ENCODE measurements at regions of chr9 and their contacts with region 1.

Region 1: GRCh38 chr9:136944519-136945279 is at the starts of genes C8G and FBXW5:
- DNase-seq: peak; percentile 59 to 96
- H3K4me3 ChIP-seq: peak within 1 kb of the TSS; percentile 88 to 90
- H3K27ac ChIP-seq: peak within 1 kb of the TSS; percentile 52 to 87
- H3K4me1 ChIP-seq: peaks cover 6 to 21% of the 10 kb centered on the region in 2 donors
- H3K27me3 ChIP-seq: no peaks in the 10 kb centered on the region
- CTCF ChIP-seq: peak; percentile 99
- total RNA-seq, gene C8G: 8.6 TPM
- total RNA-seq, gene FBXW5: 421 TPM

Region 2: DNA sequence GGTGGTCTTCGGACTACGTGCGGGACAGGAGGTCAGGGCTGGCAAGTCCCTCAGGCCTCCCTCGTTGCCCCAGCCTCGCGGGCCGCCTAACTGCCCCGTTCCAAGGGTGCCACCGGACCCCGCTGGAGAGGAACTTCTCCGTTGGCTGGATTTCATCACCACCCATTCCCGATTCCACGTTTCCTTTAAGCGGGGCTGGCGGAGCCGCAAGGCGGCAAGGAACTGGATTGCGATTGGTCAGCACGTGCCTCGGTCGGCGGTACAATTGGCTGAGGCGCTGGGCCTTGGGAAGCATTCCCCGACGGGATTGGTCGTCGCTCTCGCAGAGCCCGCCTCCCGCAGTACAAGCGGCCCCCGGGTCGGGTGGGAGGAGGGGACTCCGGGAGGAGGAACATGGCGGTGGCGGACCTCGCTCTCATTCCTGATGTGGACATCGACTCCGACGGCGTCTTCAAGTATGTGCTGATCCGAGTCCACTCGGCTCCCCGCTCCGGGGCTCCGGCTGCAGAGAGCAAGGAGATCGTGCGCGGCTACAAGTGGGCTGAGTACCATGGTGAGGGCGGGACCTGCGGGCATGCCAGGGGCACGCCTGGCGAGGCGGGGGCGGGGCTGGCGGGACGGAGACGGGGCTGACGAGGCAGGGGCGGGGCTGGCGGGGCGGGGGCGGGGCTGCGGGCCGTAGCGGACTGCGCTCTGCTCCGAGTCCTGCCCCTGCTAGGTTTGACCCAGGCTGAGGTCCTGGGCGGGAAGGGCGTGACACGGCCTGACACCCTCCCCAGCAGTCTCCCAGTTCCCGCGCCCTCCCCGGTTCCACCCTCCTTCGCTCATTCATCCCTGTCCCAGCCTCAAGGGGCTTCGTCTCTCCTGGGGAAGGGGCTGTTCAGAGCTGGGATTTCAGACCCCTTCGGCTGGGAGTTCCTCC is 95.4 kb before region 1 on chr9 and contains the start of gene PHPT1:
- intact Hi-C with region 1: loop called (anchors 2 kb)
- DNase-seq: peak; percentile 94 to 99
- H3K4me3 ChIP-seq: peak within 1 kb of the TSS; percentile 85 to 98
- H3K27ac ChIP-seq: peak within 1 kb of the TSS; percentile 93 to 95
- H3K4me1 ChIP-seq: peaks cover 8 to 21% of the 10 kb centered on the region in 2 donors
- H3K27me3 ChIP-seq: peaks cover 23% of the 10 kb centered on the region
- CTCF ChIP-seq: no peak
- total RNA-seq, gene PHPT1: 108 TPM

Region 3: GRCh38 chr9:136885950-136886578 is 58.6 kb before region 1 on chr9 and contains the start of gene TRAF2:
- intact Hi-C with region 1: loop called (anchors 1 kb)
- DNase-seq: peak; percentile 88 to 98
- H3K4me3 ChIP-seq: peak within 1 kb of the TSS; percentile 89 to 96
- H3K27ac ChIP-seq: peak within 1 kb of the TSS; percentile 76 to 78
- H3K4me1 ChIP-seq: peaks cover 0 to 8% of the 10 kb centered on the region in 2 donors
- H3K27me3 ChIP-seq: no peaks in the 10 kb centered on the region
- CTCF ChIP-seq: peak in 1 of 3 experiments; percentile 30
- total RNA-seq, gene TRAF2: 4.4 TPM

Region 4: GRCh38 chr9:136991993-136992818 is 47.5 kb after region 1 on chr9 and contains the start of gene PAXX:
- intact Hi-C with region 1: loop called (anchors 1 kb)
- DNase-seq: peak; percentile 57 to 93
- H3K4me3 ChIP-seq: peak within 1 kb of the TSS; percentile 79 to 85
- H3K27ac ChIP-seq: peak within 1 kb of the TSS; percentile 66 to 83
- H3K4me1 ChIP-seq: peaks cover 21 to 29% of the 10 kb centered on the region in 2 donors
- H3K27me3 ChIP-seq: no peaks in the 10 kb centered on the region
- CTCF ChIP-seq: no peak
- total RNA-seq, gene PAXX: 87.0 TPM